IMR-90 (cell line): ENCODE measurements at regions of chr19 and their contacts with region 1.

Region 1: DNA sequence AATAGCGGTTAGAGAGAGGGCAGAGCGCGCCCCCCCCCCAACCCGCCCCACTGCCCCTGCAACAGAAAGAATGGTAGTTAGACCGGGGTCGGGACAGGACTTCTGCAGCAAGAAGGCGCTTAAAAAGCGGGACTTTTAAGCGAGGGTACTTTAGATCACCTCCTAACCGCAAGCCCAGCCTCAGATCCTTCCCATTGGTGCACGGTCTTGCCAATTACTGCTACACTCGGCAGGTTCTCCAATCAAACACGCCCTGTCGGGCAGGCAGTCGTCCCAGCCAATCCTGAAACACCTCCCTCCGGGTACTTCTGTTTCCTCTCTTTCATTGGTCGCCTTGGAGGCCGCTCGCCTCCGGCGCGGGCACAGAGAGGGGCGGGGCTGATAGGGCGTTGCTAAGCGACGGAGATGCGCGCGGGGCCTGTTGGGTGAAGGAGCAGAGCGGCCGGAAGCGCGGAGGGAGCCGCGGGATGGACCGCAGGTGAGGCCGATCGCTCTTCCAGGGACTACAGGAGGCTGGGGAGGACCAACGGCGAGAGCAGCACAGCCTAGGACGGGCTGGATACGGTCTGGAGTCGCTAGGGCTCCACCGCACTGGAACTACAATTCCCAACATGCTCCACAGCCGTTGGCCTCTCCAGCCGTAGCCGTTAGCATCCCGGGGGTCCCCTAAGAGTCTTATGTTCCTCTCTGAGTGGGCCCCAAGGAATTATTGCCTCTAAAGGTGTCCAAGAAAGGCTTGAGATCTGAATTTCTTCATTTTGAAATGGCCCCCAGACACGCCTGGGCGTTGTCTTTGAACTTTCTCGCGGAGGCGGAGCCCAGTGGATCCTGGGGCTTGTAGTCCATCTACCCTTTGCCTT is at the start of gene PROSER3:
- DNase-seq: peak; percentile 100
- ATAC-seq: peak; percentile 86
- H3K4me3 ChIP-seq: peak within 1 kb of the TSS; percentile 58
- H3K27ac ChIP-seq: peak within 1 kb of the TSS; percentile 97
- H3K4me1 ChIP-seq: peaks cover 13% of the 10 kb centered on the region
- H3K27me3 ChIP-seq: no peaks in the 10 kb centered on the region
- CTCF ChIP-seq: no peak
- POLR2A ChIP-seq: peak; percentile 71
- RAD21 ChIP-seq: no peak
- total RNA-seq, gene PROSER3: 3.3 and 5.4 TPM in 2 replicates

Region 2: DNA sequence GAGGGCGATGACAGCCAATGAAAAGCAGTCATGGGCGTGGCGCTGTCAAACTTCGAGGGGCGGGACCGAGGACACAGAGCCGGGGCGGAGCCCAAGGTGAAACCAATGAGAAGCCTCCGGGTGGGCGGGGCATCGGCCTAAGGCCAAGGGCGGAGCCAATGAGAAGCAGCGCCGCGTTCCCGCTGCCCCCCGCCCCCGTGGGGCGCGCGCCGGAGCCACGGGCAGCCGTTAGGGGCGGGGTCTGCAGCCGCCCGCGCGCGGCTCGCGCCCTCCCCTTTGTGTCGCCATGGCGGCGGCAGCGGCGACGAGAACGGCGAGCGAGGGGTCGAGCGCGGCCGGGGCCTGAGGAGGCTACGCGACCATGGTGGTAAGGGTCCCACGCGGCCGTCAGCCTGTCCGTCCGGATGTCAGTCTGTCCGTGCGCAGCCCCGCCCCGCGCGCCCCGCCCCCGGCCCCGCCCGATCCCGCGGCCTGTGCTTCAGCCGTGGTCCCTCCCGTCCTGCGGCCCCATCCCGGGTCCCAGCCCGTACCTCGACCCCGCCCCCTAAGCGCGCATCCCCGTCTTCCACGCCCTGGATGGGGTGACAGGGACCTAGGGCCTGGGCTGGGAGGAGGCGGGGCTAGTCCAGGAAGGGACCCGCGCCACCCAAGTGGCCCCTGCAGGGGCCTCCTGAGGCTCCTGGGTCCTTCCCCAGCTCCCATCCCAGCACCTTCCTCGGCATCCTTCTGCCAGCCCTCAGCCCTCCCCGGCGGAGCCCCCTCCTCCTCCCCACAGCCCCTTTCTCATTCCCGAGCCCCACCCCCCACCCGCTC is 17.5 kb after region 1 on chr19 and contains the start of gene ARHGAP33:
- CTCF ChIA-PET with region 1: no interaction called
- POLR2A ChIA-PET with region 1: no interaction called
- dilution Hi-C with region 1: no loop called
- in situ Hi-C with region 1: no loop called
- intact Hi-C with region 1: loop called (anchors 2 kb)
- DNase-seq: peak; percentile 92
- ATAC-seq: peak; percentile 99
- H3K4me3 ChIP-seq: peak within 1 kb of the TSS; percentile 86
- H3K27ac ChIP-seq: peak within 1 kb of the TSS; percentile 73
- H3K4me1 ChIP-seq: peaks cover 6% of the 10 kb centered on the region
- H3K27me3 ChIP-seq: no peaks in the 10 kb centered on the region
- CTCF ChIP-seq: no peak
- POLR2A ChIP-seq: 0 out of 2 replicates have a peak, but pooled peaks have one; percentile 46
- RAD21 ChIP-seq: no peak
- total RNA-seq, gene ARHGAP33: 0.28 and 0.72 TPM in 2 replicates

Region 3: GRCh38 chr19:35790981-35791813 is 33.2 kb after region 1 on chr19:
- CTCF ChIA-PET with region 1: no interaction called
- POLR2A ChIA-PET with region 1: no interaction called
- dilution Hi-C with region 1: no loop called
- in situ Hi-C with region 1: no loop called
- intact Hi-C with region 1: no loop called
- DNase-seq: no peak
- ATAC-seq: no peak
- H3K4me3 ChIP-seq: no peak overlapping the region
- H3K27ac ChIP-seq: no peak overlapping the region
- H3K4me1 ChIP-seq: no peaks in the 10 kb centered on the region
- H3K27me3 ChIP-seq: peaks cover 7% of the 10 kb centered on the region; the same call in 1 of the 2 replicates
- CTCF ChIP-seq: 0 out of 2 replicates have a peak, but pooled peaks have one; percentile 7
- POLR2A ChIP-seq: no peak
- RAD21 ChIP-seq: no peak

Region 4: DNA sequence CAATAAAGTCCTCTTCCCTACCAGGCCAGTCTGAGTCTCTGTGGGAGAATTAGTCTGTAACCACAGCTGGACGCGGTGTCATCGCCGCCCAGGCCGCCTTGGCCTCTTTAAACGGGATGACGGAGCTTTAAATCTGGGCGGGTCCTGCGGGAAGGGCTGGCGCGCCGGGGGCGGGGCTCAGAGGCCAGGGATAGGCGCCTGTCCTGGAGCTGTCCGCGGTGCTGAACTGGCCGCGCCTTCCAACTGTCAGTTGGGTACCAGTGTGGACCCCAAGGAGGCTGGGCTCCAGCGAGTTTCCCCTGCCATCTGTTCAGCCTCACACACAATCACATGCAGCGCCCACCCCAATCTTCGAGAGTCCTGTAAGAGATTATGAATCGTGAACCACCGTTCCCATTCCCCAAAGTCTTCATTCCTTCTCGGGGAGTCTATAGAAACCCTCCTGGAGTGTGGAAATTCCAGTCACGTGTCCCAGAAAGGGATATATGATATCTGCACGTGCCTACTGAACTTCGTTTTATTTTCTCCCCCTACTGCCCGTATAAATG is 121.9 kb after region 1 on chr19:
- CTCF ChIA-PET with region 1: interaction called, 3 read pairs
- POLR2A ChIA-PET with region 1: interaction called, 18 read pairs
- dilution Hi-C with region 1: no loop called
- in situ Hi-C with region 1: no loop called
- intact Hi-C with region 1: no loop called
- DNase-seq: peak; percentile 89
- ATAC-seq: peak; percentile 100
- H3K4me3 ChIP-seq: no peak overlapping the region
- H3K27ac ChIP-seq: no peak overlapping the region
- H3K4me1 ChIP-seq: no peaks in the 10 kb centered on the region
- H3K27me3 ChIP-seq: no peaks in the 10 kb centered on the region
- CTCF ChIP-seq: no peak
- POLR2A ChIP-seq: no peak
- RAD21 ChIP-seq: no peak